ENCODE measurements at regions of chr2 and their contacts with region 1.

Region 1: DNA sequence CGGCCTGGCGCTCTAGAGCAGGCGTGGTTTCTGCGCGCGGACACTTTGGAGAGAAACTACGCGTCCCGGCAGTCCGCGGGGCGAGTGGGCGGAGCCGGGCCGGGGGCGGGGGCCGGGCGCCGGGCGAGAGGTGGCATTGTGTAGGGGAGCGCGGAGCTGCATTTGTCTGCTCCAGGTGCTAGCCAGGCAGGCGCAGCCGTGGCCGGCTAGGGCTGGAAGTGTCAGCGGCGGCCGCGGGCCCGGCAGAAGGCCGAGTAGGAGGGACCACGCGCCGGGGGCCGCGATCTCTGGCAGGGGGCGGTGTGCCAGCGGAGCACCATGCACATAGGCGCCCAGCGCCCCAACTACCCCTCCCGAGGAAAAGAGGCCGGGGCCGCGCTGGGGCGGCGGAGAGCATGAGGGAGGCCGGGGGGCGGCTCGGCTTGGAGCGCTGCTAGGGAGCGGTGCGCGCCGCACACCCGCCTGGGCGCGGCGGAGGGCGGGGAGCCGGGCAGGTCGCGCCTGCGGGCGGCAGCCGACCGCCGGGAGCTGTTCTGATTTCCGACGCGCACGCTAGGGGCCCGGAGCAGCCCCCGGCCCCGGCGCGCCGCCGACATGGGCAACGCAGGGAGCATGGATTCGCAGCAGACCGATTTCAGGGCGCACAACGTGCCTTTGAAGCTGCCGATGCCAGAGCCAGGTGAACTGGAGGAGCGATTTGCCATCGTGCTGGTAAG is at the start of gene FMNL2:
- DNase-seq: peak; percentile 84 to 90 (median 86)
- ATAC-seq: peak; percentile 81 to 96 (median 94)
- H3K4me3 ChIP-seq: peak within 1 kb of the TSS; percentile 73 to 99 (median 94)
- H3K27ac ChIP-seq: peak within 1 kb of the TSS; percentile 63 to 86 (median 79)
- H3K4me1 ChIP-seq: peaks cover 0 to 31% (median 10%) of the 10 kb centered on the region in 12 donors
- H3K27me3 ChIP-seq: no peaks in the 10 kb centered on the region
- CTCF ChIP-seq: peak in 7 of 12 donors; percentile 8 to 46 (median 13)
- POLR2A ChIP-seq: peak in 1 of 2 donors; percentile 74
- total RNA-seq, gene FMNL2: 4.7 to 19.4 (median 5.5) TPM

Region 2: DNA sequence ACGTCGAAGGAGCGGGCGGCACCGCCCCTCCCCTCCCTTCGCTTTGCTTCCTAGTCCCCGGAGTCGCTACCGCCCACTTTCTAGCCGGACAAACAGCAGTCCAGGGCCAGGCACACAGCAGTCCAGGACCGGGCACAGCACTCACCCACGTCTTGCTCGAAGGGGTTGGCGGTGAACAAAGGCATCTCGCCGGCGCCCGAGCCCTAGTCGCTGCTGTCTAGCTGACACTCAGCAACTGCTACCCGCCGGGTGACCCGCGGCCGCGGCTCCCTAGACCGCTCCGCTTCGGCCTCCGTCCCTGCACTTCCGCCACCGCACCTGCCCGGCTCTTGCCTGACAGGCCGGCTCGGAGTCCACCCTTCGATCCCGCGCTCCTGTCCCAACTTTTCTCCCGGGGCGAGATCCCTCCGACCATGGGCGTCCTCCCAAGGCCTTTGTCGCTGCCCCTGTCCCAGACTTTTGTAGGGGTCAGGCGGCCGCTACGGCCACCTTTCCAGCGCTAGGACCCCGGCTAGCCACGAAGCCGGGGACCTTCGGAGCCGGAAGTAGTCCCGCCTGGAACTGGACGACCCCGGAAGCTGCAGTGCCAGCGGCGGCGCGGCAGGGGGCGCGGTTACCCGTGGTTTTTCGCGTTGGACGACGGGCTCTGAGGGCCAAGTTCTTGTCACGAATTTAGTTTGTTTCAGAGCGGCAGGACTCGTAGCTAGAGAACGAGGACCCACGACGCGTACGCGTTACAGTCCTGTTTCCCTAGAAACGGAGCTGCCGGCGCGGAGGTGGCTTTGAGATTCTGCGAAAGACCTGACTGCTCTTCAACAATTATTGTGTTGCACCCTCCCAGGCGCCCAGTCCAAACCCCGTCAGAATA is 159.5 kb before region 1 on chr2 and contains the start of gene STAM2:
- intact Hi-C with region 1: loop called in 1 of 10 experiments (anchors 10 kb)
- DNase-seq: peak; percentile 92 to 97 (median 94)
- ATAC-seq: peak; percentile 93 to 97 (median 95)
- H3K4me3 ChIP-seq: peak within 1 kb of the TSS; percentile 65 to 97 (median 72)
- H3K27ac ChIP-seq: peak within 1 kb of the TSS; percentile 92 to 100 (median 96)
- H3K4me1 ChIP-seq: peaks cover 0 to 43% (median 28%) of the 10 kb centered on the region in 12 donors
- H3K27me3 ChIP-seq: no peaks in the 10 kb centered on the region
- CTCF ChIP-seq: peak; percentile 94 to 99 (median 98)
- POLR2A ChIP-seq: peak in 1 of 2 donors; percentile 12
- total RNA-seq, gene STAM2: 21.4 to 36.1 (median 27.0) TPM

Region 3: GRCh38 chr2:152407204-152407721 is 72.1 kb after region 1 on chr2:
- intact Hi-C with region 1: loop called in 5 of 10 experiments (anchors 5 to 10 kb)
- DNase-seq: peak in 4 of 5 donors; percentile 33 to 47 (median 44)
- ATAC-seq: peak; percentile 44 to 76 (median 72)
- H3K4me3 ChIP-seq: peak overlapping the region in 11 of 12 donors; percentile 9 to 46 (median 28)
- H3K27ac ChIP-seq: peak overlapping the region in 8 of 12 donors; percentile 3 to 89 (median 36)
- H3K4me1 ChIP-seq: peaks cover 0 to 90% (median 48%) of the 10 kb centered on the region in 12 donors
- H3K27me3 ChIP-seq: no peaks in the 10 kb centered on the region
- CTCF ChIP-seq: no peak
- POLR2A ChIP-seq: no peak

Region 4: GRCh38 chr2:152470861-152471854 is 136.0 kb after region 1 on chr2:
- intact Hi-C with region 1: loop called in 1 of 10 experiments (anchors 5 kb)
- DNase-seq: no peak
- ATAC-seq: peak in 3 of 4 donors; percentile 49 to 69 (median 68)
- H3K4me3 ChIP-seq: no peak overlapping the region
- H3K27ac ChIP-seq: peak overlapping the region in 8 of 12 donors; percentile 2 to 60 (median 24)
- H3K4me1 ChIP-seq: peaks cover 0 to 69% (median 39%) of the 10 kb centered on the region in 12 donors
- H3K27me3 ChIP-seq: no peaks in the 10 kb centered on the region
- CTCF ChIP-seq: no peak
- POLR2A ChIP-seq: no peak

Region 5: GRCh38 chr2:152542995-152543481 is 207.9 kb after region 1 on chr2:
- intact Hi-C with region 1: loop called in 1 of 10 experiments (anchors 10 kb)
- DNase-seq: no peak
- ATAC-seq: peak in 1 of 4 donors; percentile 72
- H3K4me3 ChIP-seq: no peak overlapping the region
- H3K27ac ChIP-seq: peak overlapping the region in 3 of 12 donors; percentile 3 to 40 (median 34)
- H3K4me1 ChIP-seq: peaks cover 0 to 31% (median 8%) of the 10 kb centered on the region in 12 donors
- H3K27me3 ChIP-seq: no peaks in the 10 kb centered on the region
- CTCF ChIP-seq: no peak
- POLR2A ChIP-seq: no peak

Region 6: GRCh38 chr2:152611458-152612231 is 276.5 kb after region 1 on chr2:
- intact Hi-C with region 1: loop called in 1 of 10 experiments (anchors 10 kb)
- DNase-seq: peak in 4 of 5 donors; percentile 29 to 55 (median 40)
- ATAC-seq: peak; percentile 79 to 93 (median 92)
- H3K4me3 ChIP-seq: peak overlapping the region in 2 of 12 donors; percentile 13 to 36
- H3K27ac ChIP-seq: peak overlapping the region in 8 of 12 donors; percentile 10 to 93 (median 46)
- H3K4me1 ChIP-seq: peaks cover 0 to 32% (median 5%) of the 10 kb centered on the region in 12 donors
- H3K27me3 ChIP-seq: no peaks in the 10 kb centered on the region
- CTCF ChIP-seq: no peak
- POLR2A ChIP-seq: no peak

Region 7: DNA sequence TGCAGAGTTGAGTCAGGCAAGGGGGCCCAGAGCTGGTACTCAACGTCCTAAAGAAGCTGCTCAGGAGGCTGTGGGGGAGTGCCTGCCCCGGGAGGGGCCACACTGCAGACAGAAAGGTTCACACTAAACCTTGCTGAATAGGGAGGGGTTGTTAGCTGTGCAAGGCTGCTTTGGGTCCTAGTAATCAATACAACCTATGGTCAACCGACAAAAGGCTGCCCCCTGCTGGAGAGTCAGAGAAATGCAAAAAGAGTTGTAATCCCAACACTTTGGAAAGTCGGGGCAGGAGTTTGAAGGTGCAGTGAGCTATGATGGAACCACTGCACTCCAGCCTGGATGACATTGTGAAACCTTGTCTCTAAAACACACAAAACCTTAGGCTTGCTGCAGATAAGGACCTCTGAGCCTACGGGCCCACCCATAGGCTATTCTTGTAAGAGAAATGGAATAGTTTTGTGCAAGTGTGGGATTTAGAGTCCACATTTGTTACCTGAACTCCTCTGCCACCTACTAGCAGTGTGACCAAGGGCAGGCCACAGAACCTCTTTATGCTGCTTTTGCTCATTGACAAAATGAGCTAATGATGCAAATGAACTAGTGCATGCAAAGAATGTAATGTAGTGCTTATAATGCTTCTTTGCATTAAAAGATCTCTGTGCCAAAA is 300.6 kb after region 1 on chr2:
- intact Hi-C with region 1: loop called in 2 of 10 experiments (anchors 10 kb)
- DNase-seq: peak in 3 of 5 donors; percentile 39 to 54 (median 41)
- ATAC-seq: peak in 3 of 4 donors; percentile 55 to 63 (median 63)
- H3K4me3 ChIP-seq: no peak overlapping the region
- H3K27ac ChIP-seq: no peak overlapping the region
- H3K4me1 ChIP-seq: peaks cover 0 to 7% (median 0%) of the 10 kb centered on the region in 12 donors
- H3K27me3 ChIP-seq: no peaks in the 10 kb centered on the region
- CTCF ChIP-seq: peak; percentile 70 to 89 (median 80)
- POLR2A ChIP-seq: no peak

Measured in heart left ventricle (tissue), 16 donors.